Mucosa of descending colon (tissue), 3 donors: ENCODE measurements at regions of chr20 and their contacts with region 1.

Region 1: DNA sequence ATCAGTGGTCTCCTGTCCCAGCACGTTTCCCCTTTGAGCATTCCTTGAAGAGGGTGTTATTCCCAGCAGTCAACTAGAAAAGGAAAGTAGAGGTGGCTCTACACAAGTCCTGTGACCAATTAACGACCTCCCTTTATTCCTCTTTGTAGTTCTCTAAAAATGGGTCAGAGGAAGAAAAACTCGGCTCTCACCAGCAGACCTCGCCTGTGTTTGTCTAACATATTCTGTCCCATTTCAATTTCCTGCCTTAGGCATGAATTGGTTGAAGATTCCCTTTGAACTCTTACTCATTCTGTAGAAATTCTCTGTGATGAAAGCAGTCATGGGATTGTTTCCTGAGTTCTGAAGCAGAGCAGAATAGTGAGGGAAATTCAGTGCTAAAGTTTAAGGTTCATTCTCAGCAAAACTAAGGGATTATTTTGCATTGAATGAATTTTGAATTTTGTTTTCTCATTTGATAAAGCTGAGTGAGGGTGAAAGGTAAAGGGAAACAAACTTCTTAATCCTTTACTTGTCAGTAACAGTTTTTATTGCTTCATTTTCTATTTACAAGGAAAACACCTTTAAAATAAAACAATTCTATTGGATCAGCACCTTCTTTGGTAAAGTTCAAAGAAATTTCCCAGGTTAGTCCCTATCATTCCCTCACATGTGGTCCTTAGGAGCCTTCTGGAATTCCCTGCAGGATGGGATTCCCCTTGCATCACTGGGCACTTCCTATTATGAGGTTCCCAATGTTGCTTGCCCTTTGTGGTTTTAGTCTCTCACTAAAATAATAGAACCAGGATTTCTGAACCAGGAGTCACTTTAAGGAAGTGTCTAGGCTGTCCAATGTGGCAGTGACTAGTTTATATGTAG is 105.8 kb downstream of the SLX4IP start:
- DNase-seq: no peak
- ATAC-seq: peak; percentile 80
- H3K4me3 ChIP-seq: no peak overlapping the region
- H3K4me1 ChIP-seq: peaks cover 3% of the 10 kb centered on the region
- CTCF ChIP-seq: no peak

Region 2: GRCh38 chr20:10469599-10469998 is 71.3 kb before region 1 on chr20:
- intact Hi-C with region 1: loop called in 1 of 2 experiments (anchors 10 kb)
- DNase-seq: peak in 1 of 3 donors; percentile 65
- ATAC-seq: peak; percentile 88
- H3K4me3 ChIP-seq: no peak overlapping the region
- H3K4me1 ChIP-seq: no peaks in the 10 kb centered on the region
- CTCF ChIP-seq: no peak

Region 3: GRCh38 chr20:11305406-11305805 is 764.5 kb after region 1 on chr20:
- intact Hi-C with region 1: no loop called
- DNase-seq: no peak
- ATAC-seq: no peak
- H3K4me3 ChIP-seq: no peak overlapping the region
- H3K4me1 ChIP-seq: no peaks in the 10 kb centered on the region
- CTCF ChIP-seq: no peak